B cell (primary cell): ENCODE measurements at regions of chr10 and their contacts with region 1.

Region 1: DNA sequence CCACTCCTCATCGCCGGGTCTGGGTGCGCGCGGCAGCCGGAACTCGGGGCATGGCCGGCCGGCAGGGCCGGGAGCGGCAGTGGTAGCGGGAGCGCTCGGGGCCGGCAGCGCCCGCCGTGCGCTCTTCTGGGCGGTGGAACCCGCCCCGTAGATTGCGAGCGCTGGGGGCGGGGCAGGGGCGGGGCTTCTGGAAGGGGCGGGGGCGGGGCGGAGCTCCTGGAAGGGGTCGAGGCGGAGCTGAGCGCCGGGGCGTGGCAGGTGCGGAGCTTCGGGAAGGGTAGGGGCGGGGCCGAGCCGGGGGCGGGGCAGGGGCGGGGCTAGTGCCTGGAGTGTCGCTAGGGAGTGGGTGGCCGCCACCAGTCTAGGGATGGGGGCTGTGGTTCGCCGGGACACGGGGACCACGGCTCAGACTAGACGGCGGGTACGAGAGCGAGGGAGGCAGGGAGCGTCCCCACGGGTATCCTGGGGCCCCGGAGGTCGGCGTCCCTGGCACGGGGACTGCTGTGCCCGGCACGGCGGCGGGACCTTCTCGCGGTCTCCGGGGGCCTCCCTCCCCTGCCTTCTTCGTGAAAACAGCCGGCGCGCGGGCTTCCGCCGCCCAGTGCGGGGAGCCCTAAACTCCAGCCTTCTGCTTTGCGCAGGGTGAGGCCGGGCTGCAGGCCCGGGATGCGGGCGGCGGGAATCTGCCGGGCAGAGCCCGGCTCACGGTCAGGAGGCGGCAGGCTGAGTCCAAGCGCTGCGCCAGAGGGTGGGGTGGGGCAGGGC is at the start of gene STK32C:
- DNase-seq: peak; percentile 92
- ATAC-seq: peak; percentile 87
- H3K4me3 ChIP-seq: peak within 1 kb of the TSS; percentile 21 to 74 (median 66)
- H3K4me3 Mint-ChIP-seq: peak within 1 kb of the TSS; percentile 89
- H3K27ac ChIP-seq: no peak within 1 kb of the TSS
- H3K27ac Mint-ChIP-seq: peak within 1 kb of the TSS; percentile 46
- H3K4me1 ChIP-seq: peaks cover 11% of the 10 kb centered on the region in 2 donors
- H3K4me1 Mint-ChIP-seq: peaks cover 11% of the 10 kb centered on the region
- H3K27me3 ChIP-seq: peaks cover 0 to 26% (median 9%) of the 10 kb centered on the region in 4 experiments
- H3K27me3 Mint-ChIP-seq: peaks cover 14% of the 10 kb centered on the region
- CTCF ChIP-seq: no peak
- total RNA-seq, gene STK32C: 16.8 and 20.0 TPM in 2 replicates

Region 2: DNA sequence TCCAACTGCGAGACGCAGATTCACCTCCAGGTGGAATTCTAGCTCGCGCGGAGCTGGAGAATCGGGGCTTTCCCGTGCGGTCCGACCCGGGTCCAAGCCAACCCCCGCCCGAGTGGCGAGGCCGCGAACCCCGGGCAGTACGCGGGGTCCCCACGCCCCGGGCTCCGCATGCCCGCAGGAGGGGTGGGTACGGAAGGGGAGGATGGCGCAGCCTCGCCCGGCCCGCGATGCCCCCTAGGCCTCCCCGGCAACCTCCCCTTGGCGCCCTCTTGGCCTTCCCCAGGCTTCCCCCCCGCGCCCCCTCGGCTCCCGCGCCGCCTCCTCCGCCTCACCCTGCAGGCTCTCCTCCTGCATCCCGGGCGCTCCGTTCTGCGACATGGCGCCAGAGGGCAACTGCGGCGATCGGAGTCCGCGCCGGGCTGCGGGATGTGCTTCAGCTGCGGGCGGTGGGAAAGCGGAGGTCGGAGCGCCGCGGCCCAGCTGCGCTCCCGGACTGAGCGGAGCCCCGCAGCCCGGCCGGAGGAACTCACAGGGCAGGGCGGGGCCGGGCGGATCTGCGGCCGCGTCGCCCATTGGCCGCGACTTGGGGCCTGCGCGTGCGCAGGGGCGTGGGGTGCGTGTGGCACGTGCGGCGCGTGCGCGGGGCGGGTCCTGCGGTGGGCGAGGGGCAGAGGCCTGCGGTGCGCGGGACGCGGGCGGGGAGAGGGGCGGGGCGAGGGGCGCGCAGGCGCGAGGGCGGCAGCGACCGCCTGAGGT is 326.4 kb before region 1 on chr10 and contains the start of gene BNIP3:
- CTCF ChIA-PET with region 1: no interaction called
- POLR2A ChIA-PET with region 1: no interaction called
- intact Hi-C with region 1: loop called (anchors 5 kb)
- DNase-seq: peak; percentile 95
- ATAC-seq: peak; percentile 94
- H3K4me3 ChIP-seq: peak within 1 kb of the TSS; percentile 45 to 74 (median 66)
- H3K4me3 Mint-ChIP-seq: peak within 1 kb of the TSS; percentile 86
- H3K27ac ChIP-seq: peak within 1 kb of the TSS in 1 of 2 donors; percentile 29
- H3K27ac Mint-ChIP-seq: peak within 1 kb of the TSS; percentile 69
- H3K4me1 ChIP-seq: peaks cover 11 to 17% of the 10 kb centered on the region in 2 donors
- H3K4me1 Mint-ChIP-seq: peaks cover 17% of the 10 kb centered on the region
- H3K27me3 ChIP-seq: peaks cover 0 to 13% (median 0%) of the 10 kb centered on the region in 4 experiments
- H3K27me3 Mint-ChIP-seq: peaks cover 4% of the 10 kb centered on the region
- CTCF ChIP-seq: no peak
- total RNA-seq, gene BNIP3: 10.3 and 10.9 TPM in 2 replicates

Region 3: DNA sequence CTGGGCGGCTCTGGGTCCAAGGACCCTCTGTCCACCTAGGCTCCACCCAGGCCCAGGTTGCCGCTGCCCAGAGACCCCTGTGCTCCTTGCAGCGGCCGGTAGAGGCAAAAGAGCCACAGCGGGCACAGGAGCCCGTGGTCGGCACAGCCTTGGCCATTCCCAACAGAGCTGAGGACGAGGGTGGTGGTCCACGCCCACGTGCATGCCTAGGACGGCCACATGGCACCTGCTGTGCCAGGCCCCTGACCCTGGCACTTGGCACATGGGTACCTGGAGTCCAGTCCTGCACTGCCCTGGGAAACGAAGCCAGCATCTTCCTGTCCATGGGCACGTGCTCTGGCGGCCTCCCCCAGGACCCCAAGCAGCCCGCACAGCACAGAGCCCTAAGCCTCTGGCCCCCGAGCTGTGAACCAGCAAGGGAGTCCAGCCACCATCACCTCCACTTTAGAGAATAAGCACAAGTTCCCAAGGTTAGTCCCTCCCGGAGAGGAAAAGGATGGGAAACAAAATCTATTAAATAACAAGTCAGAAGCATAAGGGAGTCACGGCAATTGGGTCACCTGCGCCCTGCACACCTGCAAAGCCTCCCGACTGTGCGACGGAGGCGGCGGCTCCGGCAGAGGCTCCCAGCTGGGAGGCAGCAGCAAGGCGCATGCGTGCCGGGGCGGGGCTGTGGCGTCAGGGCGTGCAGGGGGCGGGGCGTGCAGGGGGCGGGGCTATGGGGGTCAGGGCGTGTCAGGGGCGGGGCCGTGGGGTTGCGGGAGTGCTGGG is 59.4 kb before region 1 on chr10:
- CTCF ChIA-PET with region 1: no interaction called
- POLR2A ChIA-PET with region 1: no interaction called
- intact Hi-C with region 1: loop called (anchors 1 kb)
- DNase-seq: peak; percentile 47
- ATAC-seq: peak; percentile 62
- H3K4me3 ChIP-seq: peak overlapping the region in 2 of 5 experiments; percentile 31 to 41
- H3K4me3 Mint-ChIP-seq: peak overlapping the region; percentile 62
- H3K27ac ChIP-seq: no peak overlapping the region
- H3K27ac Mint-ChIP-seq: no peak overlapping the region
- H3K4me1 ChIP-seq: peaks cover 0 to 4% of the 10 kb centered on the region in 2 donors
- H3K4me1 Mint-ChIP-seq: peaks cover 5% of the 10 kb centered on the region
- H3K27me3 ChIP-seq: no peaks in the 10 kb centered on the region
- H3K27me3 Mint-ChIP-seq: no peaks in the 10 kb centered on the region
- CTCF ChIP-seq: no peak

Region 4: GRCh38 chr10:132353456-132354355 is 45.7 kb after region 1 on chr10:
- CTCF ChIA-PET with region 1: interaction called, 3 read pairs
- POLR2A ChIA-PET with region 1: no interaction called
- intact Hi-C with region 1: loop called (anchors 1 kb)
- DNase-seq: no peak
- ATAC-seq: no peak
- H3K4me3 ChIP-seq: no peak overlapping the region
- H3K4me3 Mint-ChIP-seq: no peak overlapping the region
- H3K27ac ChIP-seq: no peak overlapping the region
- H3K27ac Mint-ChIP-seq: no peak overlapping the region
- H3K4me1 ChIP-seq: peaks cover 0 to 7% of the 10 kb centered on the region in 2 donors
- H3K4me1 Mint-ChIP-seq: peaks cover 5% of the 10 kb centered on the region
- H3K27me3 ChIP-seq: no peaks in the 10 kb centered on the region
- H3K27me3 Mint-ChIP-seq: no peaks in the 10 kb centered on the region
- CTCF ChIP-seq: no peak

Region 5: DNA sequence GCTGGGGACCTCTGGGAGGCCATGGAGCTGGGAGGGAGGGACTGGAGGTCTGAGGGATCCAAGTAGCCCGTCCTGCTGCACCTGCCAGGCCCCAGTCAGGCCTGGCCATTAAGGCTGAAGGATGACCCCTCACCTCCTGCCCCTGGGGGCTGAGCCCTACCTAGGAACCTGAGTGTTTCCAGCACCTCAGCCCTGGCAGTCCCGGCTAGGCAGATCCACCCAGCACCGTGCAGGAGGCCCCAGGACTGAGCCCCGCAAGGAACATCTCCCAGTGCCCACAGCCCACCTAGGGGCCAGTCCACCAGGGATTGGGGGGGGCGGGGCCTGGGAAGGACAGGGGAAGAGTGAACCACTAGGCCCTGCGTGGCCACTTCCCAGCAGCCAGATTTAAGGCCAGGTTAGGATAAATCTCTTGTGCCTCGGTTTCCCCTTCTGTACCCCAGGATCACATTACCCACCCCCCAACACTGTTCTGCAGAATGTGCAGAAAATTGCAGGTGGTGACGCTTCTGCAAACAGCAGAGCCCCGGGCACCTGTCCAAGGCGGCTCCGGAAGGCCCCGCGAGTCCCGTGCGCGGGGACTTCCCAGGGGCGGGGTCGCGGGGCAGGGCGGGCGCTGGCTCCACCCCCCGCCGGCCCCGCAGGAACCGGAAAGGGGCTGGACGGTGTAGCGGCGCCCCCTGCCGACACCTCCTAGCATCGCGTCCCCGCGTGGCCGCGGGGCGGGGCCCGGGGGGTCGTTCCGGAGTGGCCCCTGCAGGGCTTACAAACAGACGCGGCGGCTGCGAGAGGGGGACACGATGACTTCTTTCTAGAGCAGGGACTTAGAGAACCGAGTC is 144.8 kb after region 1 on chr10:
- CTCF ChIA-PET with region 1: no interaction called
- POLR2A ChIA-PET with region 1: no interaction called
- intact Hi-C with region 1: loop called (anchors 2 kb)
- DNase-seq: peak; percentile 95
- ATAC-seq: peak; percentile 92
- H3K4me3 ChIP-seq: peak overlapping the region in 2 of 5 experiments; percentile 21 to 45
- H3K4me3 Mint-ChIP-seq: peak overlapping the region; percentile 64
- H3K27ac ChIP-seq: peak overlapping the region; percentile 83 to 84
- H3K27ac Mint-ChIP-seq: peak overlapping the region; percentile 86
- H3K4me1 ChIP-seq: peaks cover 22 to 35% of the 10 kb centered on the region in 2 donors
- H3K4me1 Mint-ChIP-seq: peaks cover 30% of the 10 kb centered on the region
- H3K27me3 ChIP-seq: no peaks in the 10 kb centered on the region
- H3K27me3 Mint-ChIP-seq: no peaks in the 10 kb centered on the region
- CTCF ChIP-seq: peak; percentile 91